Activated CD4-positive, alpha-beta memory T cell treated with anti-CD3 and anti-CD28 coated beads, Interleukin-2, amount 10 ng/mL, durations not matched to agents 7 days and 5 days (primary cell): ENCODE measurements at regions of chr6 and their contacts with region 1.

Region 1: DNA sequence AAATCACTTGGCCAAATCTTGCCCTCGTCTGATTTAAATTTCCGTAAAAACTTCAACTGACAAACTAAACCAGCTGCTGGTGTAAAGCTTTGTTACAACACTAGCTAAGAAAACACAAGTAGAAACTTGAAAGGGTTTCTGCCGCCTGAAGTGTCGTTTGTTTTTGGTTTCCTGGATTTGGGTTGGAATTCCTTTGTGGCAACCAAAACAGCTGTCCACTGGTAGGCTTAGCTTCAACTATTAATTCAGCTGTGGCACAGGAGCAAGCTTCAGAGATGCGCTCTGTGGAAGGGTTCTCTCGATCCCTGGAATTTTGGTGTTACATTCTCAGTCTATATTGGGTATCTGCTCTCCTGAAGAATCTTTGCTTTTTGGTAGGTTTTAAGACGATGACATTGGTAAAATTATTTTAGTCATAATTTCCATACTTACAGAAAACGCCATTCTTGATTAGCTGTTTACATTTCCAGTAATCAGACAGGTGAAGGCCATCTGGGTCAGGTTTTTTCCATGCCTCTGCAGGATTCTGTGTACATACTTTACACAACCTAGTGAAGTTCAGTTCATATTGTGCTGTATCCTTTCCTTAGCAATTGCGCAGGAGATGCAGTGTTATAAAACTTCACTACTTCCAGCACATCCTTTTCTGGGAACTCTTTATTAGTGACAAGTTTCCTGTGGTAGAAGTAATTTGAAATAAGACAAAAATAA is 29.9 kb upstream of the SAMD3 start:
- DNase-seq: no peak
- H3K4me3 Mint-ChIP-seq: no peak overlapping the region
- H3K27ac Mint-ChIP-seq: no peak overlapping the region
- H3K4me1 Mint-ChIP-seq: peaks cover 18% of the 10 kb centered on the region
- H3K27me3 Mint-ChIP-seq: no peaks in the 10 kb centered on the region

Region 2: GRCh38 chr6:130161683-130162404 is 90.8 kb before region 1 on chr6:
- CTCF ChIA-PET with region 1: no interaction called
- POLR2A ChIA-PET with region 1: no interaction called
- DNase-seq: no peak
- H3K4me3 Mint-ChIP-seq: no peak overlapping the region
- H3K27ac Mint-ChIP-seq: no peak overlapping the region
- H3K4me1 Mint-ChIP-seq: peaks cover 3% of the 10 kb centered on the region
- H3K27me3 Mint-ChIP-seq: no peaks in the 10 kb centered on the region

Region 3: DNA sequence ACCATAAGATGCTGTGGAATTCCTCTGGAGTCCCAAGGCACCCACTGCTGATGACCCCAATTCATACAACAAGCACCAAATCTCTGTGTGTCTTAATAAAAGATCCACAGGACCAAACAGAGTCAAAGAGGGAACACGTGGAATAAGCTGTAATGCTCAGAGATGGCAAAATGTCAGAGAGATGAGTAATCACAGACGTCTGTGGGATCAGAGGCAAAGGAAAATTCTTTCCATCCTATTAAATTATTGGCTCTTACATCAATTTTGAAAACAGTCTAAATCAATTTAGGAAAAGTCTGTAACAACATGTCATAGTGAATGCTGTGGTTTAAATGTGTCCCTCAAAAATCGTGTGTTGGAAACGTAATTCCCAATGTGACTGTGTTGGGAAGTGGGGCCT is 12.4 kb before region 1 on chr6:
- CTCF ChIA-PET with region 1: interaction called, 10 read pairs
- POLR2A ChIA-PET with region 1: no interaction called
- DNase-seq: no peak
- H3K4me3 Mint-ChIP-seq: no peak overlapping the region
- H3K27ac Mint-ChIP-seq: no peak overlapping the region
- H3K4me1 Mint-ChIP-seq: no peaks in the 10 kb centered on the region
- H3K27me3 Mint-ChIP-seq: peaks cover 2% of the 10 kb centered on the region